ENCODE measurements at regions of chr1 and their contacts with region 1.

Region 1: DNA sequence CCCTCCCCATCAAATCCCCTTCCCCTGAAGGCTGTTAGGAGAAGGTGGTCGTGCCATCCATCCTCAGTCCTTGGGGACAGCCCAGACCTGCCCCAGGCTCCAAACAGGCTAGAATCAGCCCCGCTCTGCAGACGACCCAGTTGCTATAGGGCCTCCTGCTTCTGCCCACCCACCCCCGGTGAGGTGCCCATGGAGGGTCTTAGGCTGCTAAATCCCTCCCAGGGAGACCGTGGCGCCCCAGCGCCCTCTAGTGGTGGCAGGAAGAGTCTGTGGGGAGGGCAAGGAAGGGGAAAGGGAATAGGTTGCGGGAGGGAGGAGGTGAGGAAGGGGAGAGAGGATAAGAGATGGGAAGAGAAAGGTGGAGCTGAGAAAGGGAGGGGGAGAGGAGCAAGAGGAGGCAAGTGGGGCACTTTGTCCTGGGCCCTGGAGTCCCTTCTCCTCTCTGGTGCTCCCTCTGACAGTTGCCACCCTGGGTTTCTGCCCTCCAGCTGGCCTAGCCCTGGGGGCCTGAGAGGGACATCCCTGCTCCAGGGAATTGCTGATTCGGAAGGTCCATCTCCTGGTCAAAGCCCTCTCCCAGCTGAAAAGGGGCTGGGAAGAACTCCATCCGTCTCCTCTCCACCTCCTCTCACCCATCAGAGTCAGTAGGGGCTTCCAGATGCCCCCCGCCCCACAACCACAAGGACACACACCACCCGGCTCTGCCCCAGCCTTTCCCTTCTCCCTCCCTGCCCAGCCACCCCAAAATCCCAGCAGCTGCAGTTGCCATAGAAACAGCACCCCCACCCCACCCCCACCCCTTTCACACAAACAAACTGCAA is 55.4 kb downstream of the CAMK2N1 start:
- DNase-seq: peak; percentile 18
- ATAC-seq: 0 out of 2 replicates have a peak, but pooled peaks have one; percentile 25
- H3K4me3 ChIP-seq: no peak overlapping the region
- H3K27ac ChIP-seq: no peak overlapping the region
- H3K4me1 ChIP-seq: peaks cover 12% of the 10 kb centered on the region
- H3K27me3 ChIP-seq: peaks cover 6% of the 10 kb centered on the region
- CTCF ChIP-seq: peak; percentile 75
- POLR2A ChIP-seq: no peak
- RAD21 ChIP-seq: peak; percentile 85

Region 2: GRCh38 chr1:20361806-20362640 is 68.5 kb before region 1 on chr1:
- CTCF ChIA-PET with region 1: interaction called, 6 read pairs
- POLR2A ChIA-PET with region 1: no interaction called
- dilution Hi-C with region 1: no loop called
- in situ Hi-C with region 1: no loop called
- intact Hi-C with region 1: loop called (anchors 5 kb)
- DNase-seq: peak; percentile 37
- ATAC-seq: peak; percentile 62
- H3K4me3 ChIP-seq: no peak overlapping the region
- H3K27ac ChIP-seq: no peak overlapping the region
- H3K4me1 ChIP-seq: peaks cover 11% of the 10 kb centered on the region; the same call in 1 of the 2 replicates
- H3K27me3 ChIP-seq: peaks cover 44% of the 10 kb centered on the region
- CTCF ChIP-seq: peak; percentile 81
- POLR2A ChIP-seq: no peak
- RAD21 ChIP-seq: peak; percentile 86

Region 3: DNA sequence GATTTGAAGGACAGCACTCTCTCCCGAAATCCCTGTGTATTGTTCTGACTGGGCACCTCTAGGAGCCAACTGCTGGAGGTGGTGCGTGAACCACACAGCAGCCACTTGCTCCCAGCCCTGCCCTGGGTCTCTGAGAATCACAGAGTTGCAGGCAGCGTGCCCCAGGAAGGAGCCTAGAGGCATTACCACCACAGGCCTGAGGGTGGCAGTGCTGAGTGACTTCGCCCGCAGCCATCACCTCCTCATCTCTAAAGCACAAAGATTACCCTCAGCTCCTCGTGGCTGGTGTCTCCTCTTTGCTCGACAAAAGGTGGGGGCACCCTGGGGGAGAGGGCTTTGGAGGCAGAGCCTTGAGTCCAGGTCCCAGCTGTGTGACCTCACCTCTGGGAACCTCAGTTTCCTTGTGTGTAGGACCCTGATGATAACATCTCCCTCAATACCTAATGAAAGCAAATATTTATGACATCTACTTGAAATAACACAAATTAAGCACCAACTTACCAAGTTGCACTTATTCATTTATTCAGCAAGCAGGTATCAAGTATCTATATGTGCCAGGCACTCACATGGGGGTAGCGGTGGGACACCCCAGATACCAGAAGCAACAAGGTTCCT is 53.6 kb before region 1 on chr1:
- CTCF ChIA-PET with region 1: interaction called, 4 read pairs
- POLR2A ChIA-PET with region 1: no interaction called
- dilution Hi-C with region 1: no loop called
- in situ Hi-C with region 1: no loop called
- intact Hi-C with region 1: loop called (anchors 1 kb)
- DNase-seq: peak; percentile 35
- ATAC-seq: peak; percentile 92
- H3K4me3 ChIP-seq: no peak overlapping the region
- H3K27ac ChIP-seq: no peak overlapping the region
- H3K4me1 ChIP-seq: peaks cover 10% of the 10 kb centered on the region; the same call in 1 of the 2 replicates
- H3K27me3 ChIP-seq: peaks cover 14% of the 10 kb centered on the region; the same call in 1 of the 2 replicates
- CTCF ChIP-seq: peak; percentile 81
- POLR2A ChIP-seq: no peak
- RAD21 ChIP-seq: peak; percentile 75

Region 4: GRCh38 chr1:20483833-20484518 is 53.4 kb after region 1 on chr1:
- CTCF ChIA-PET with region 1: interaction called, 3 read pairs
- POLR2A ChIA-PET with region 1: no interaction called
- dilution Hi-C with region 1: no loop called
- in situ Hi-C with region 1: no loop called
- intact Hi-C with region 1: loop called (anchors 5 kb)
- DNase-seq: peak; percentile 22
- ATAC-seq: no peak
- H3K4me3 ChIP-seq: peak overlapping the region; percentile 99
- H3K27ac ChIP-seq: peak overlapping the region; percentile 100
- H3K4me1 ChIP-seq: peaks cover 29% of the 10 kb centered on the region
- H3K27me3 ChIP-seq: no peaks in the 10 kb centered on the region
- CTCF ChIP-seq: 0 out of 2 replicates have a peak, but pooled peaks have one; percentile 6
- POLR2A ChIP-seq: no peak
- RAD21 ChIP-seq: no peak